Common myeloid progenitor, CD34-positive (primary cell): ENCODE measurements at regions of chr13 and their contacts with region 1.

Region 1: GRCh38 chr13:72839831-72840426 is 58.0 kb downstream of the PIBF1 start:
- DNase-seq: peak; percentile 34 to 59 (median 57)
- H3K4me3 ChIP-seq: no peak overlapping the region
- H3K27ac ChIP-seq: no peak overlapping the region
- H3K4me1 ChIP-seq: no peaks in the 10 kb centered on the region
- H3K27me3 ChIP-seq: no peaks in the 10 kb centered on the region

Region 2: GRCh38 chr13:72850959-72851677 is 11.2 kb after region 1 on chr13:
- CTCF ChIA-PET with region 1: interaction called, 25 read pairs
- POLR2A ChIA-PET with region 1: no interaction called
- DNase-seq: no peak
- H3K4me3 ChIP-seq: no peak overlapping the region
- H3K27ac ChIP-seq: no peak overlapping the region
- H3K4me1 ChIP-seq: no peaks in the 10 kb centered on the region
- H3K27me3 ChIP-seq: no peaks in the 10 kb centered on the region

Region 3: GRCh38 chr13:73708393-73708985 is 868.6 kb after region 1 on chr13:
- CTCF ChIA-PET with region 1: interaction called, 12 read pairs
- POLR2A ChIA-PET with region 1: interaction called, 3 read pairs
- DNase-seq: peak; percentile 74 to 92 (median 87)
- H3K4me3 ChIP-seq: no peak overlapping the region
- H3K27ac ChIP-seq: no peak overlapping the region
- H3K4me1 ChIP-seq: no peaks in the 10 kb centered on the region
- H3K27me3 ChIP-seq: no peaks in the 10 kb centered on the region